ENCODE measurements at regions of chr2 and their contacts with region 1.

Region 1: GRCh38 chr2:15591692-15592463 is at the start of gene DDX1:
- DNase-seq: peak; percentile 72 to 89 (median 82)
- ATAC-seq: peak; percentile 95 to 96
- H3K4me3 Mint-ChIP-seq: peak within 1 kb of the TSS; percentile 90 to 98 (median 94)
- H3K27ac Mint-ChIP-seq: peak within 1 kb of the TSS; percentile 94 to 97 (median 96)
- H3K4me1 Mint-ChIP-seq: peaks cover 16 to 48% (median 44%) of the 10 kb centered on the region in 4 donors
- H3K27me3 Mint-ChIP-seq: no peaks in the 10 kb centered on the region
- polyA plus RNA-seq, gene DDX1: 39.9 to 58.0 (median 41.3) TPM

Region 2: DNA sequence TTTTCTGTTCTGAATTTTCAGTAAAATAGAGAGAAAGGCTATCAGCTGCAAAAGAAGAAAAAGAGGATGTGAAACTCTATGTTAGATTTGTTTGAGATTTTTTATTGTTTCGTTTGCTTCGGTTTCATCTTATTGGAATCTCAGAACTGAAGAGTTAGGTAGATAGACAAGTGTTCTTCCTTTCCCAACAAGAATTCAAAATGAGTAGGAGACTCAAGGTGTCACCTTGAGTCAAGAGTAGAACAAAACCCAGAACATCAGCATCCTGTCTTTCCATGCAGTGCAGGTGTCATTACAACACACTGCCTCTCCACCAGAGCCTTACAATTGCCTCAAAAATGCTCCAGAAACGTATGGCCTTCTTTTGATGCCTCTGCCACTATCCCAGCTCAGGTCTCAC is 51.9 kb before region 1 on chr2:
- POLR2A ChIA-PET with region 1: no interaction called
- DNase-seq: no peak
- ATAC-seq: no peak
- H3K4me3 Mint-ChIP-seq: no peak overlapping the region
- H3K27ac Mint-ChIP-seq: peak overlapping the region in 2 of 10 donors; percentile 13 to 55
- H3K4me1 Mint-ChIP-seq: peaks cover 10 to 15% (median 13%) of the 10 kb centered on the region in 4 donors
- H3K27me3 Mint-ChIP-seq: no peaks in the 10 kb centered on the region

Region 3: DNA sequence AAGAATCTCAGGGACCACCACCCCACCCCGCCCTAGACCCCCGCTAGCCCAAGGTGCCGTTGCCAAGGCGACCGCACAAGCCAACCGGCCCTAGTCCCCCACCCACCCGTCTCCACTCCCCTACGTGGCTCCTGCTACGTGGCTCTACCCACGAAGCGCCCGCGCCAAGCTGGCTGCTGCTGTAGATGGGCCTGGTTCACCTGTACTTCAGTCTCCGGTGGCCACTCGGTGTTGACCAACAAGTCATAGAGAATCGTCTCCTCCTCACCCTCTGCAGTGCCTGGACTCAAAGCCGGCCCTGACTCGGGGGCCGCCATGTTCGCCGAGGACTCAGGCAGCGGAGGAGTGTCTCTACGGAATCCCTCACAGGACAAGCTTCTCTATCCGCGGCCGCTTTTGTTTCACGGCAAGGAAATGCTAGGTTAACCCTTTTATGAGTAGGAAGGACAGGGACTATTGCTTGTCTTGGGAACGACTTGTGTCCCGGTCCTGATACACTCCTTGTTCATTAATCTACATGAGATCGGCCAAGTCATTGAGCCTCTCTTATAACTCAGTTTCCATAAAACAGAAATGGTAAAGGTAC is 30.8 kb before region 1 on chr2 and contains the start of gene NBAS:
- POLR2A ChIA-PET with region 1: interaction called, 13 read pairs
- DNase-seq: peak; percentile 59 to 88 (median 73)
- ATAC-seq: peak; percentile 76 to 87
- H3K4me3 Mint-ChIP-seq: peak within 1 kb of the TSS; percentile 86 to 100 (median 99)
- H3K27ac Mint-ChIP-seq: peak within 1 kb of the TSS; percentile 91 to 100 (median 99)
- H3K4me1 Mint-ChIP-seq: peaks cover 21 to 49% (median 36%) of the 10 kb centered on the region in 4 donors
- H3K27me3 Mint-ChIP-seq: peaks cover 0 to 9% (median 0%) of the 10 kb centered on the region in 5 donors
- polyA plus RNA-seq, gene NBAS: 19.0 to 20.6 (median 20.0) TPM

Measured in naive thymus-derived CD8-positive, alpha-beta T cell (primary cell).